ENCODE measurements at regions of chr12 and their contacts with region 1.

Region 1: DNA sequence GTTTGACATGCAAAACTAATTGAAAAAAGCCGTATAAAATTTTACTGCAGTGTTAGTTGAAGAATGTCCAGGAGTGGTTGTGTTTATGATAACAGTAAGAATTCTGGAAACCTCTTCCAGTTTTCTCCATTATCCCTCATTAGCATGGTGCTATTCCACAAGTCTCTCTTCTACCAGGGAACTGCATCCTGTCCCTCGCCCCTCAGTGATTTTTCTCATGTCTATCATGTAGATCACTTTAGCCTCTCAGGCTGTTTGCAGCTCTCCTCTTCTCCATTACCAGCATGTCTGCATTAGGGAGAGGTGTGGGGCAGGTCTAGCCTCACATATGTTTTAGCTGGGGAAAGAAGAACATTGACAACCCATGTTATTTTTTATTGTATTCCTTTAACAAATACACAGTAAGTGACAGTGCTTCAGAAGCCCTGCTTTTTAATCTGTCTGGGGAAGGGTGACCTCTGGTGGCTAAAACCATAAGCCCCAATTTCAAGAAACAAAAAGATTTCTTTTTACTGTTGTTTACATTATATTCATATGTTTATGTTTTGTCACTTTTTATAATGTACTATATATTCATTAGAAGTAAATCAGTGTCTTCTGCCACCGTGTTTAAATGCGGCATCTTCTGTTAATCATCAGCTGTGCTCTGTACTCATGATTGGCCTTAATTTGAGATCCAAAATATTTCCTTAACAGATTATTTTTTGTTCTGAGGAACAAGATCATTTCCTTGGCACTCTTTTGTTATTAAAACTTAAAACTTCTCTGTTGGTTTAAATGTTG is 70.7 kb downstream of the RASSF8 start:
- DNase-seq: peak in 1 of 3 donors; percentile 2
- H3K4me3 ChIP-seq: no peak overlapping the region
- H3K4me3 Mint-ChIP-seq: no peak overlapping the region
- H3K27ac ChIP-seq: no peak overlapping the region
- H3K27ac Mint-ChIP-seq: no peak overlapping the region
- H3K4me1 ChIP-seq: no peaks in the 10 kb centered on the region
- H3K4me1 Mint-ChIP-seq: no peaks in the 10 kb centered on the region
- H3K27me3 ChIP-seq: no peaks in the 10 kb centered on the region
- H3K27me3 Mint-ChIP-seq: peaks cover 0 to 1% (median 0%) of the 10 kb centered on the region in 3 donors
- CTCF ChIP-seq: peak; percentile 72

Region 2: DNA sequence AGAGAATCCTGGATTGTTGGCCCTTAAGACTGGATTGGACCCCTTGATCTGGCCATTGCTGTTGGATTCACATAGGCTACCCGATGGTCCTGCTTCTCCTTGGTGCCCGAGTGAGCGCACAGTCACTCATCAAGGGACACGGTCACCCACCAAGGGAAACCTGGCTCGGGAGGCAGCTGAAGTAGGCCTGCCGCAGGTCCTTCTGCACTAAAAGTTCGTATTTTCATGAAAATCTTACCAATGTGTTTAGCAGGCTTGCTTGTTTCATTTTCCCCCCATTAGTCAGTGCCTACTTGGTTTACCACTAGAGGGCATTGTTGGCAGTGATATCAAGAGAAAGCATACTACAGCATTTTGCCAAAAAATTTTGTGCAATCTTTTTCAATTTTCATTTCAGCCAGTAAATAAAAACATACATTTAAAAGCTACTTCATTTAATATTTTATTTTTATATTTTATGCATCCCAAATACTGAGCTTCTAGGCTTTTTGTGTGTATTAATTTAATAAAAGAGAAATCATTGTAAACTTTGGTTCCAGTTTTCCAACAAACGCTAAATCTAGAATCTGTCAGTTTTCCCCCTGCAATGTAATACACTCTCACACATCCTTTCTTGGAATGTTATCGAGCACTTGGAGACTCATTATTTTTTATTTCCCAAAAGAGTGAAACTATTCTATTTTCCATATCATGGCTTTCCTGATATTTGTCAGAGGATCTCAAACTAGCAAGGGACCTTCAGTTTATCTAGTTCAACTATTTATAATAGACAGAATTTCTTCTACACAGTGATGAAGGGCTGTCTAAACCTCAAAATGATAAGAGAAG is 592.7 kb before region 1 on chr12:
- intact Hi-C with region 1: loop called (anchors 5 to 10 kb)
- DNase-seq: peak; percentile 19 to 35 (median 20)
- H3K4me3 ChIP-seq: peak overlapping the region in 2 of 3 experiments; percentile 20 to 46
- H3K4me3 Mint-ChIP-seq: peak overlapping the region; percentile 20 to 44
- H3K27ac ChIP-seq: no peak overlapping the region
- H3K27ac Mint-ChIP-seq: peak overlapping the region in 1 of 7 donors; percentile 19
- H3K4me1 ChIP-seq: no peaks in the 10 kb centered on the region
- H3K4me1 Mint-ChIP-seq: peaks cover 2% of the 10 kb centered on the region
- H3K27me3 ChIP-seq: no peaks in the 10 kb centered on the region
- H3K27me3 Mint-ChIP-seq: peaks cover 1 to 4% (median 2%) of the 10 kb centered on the region in 3 donors
- CTCF ChIP-seq: peak; percentile 86

Region 3: DNA sequence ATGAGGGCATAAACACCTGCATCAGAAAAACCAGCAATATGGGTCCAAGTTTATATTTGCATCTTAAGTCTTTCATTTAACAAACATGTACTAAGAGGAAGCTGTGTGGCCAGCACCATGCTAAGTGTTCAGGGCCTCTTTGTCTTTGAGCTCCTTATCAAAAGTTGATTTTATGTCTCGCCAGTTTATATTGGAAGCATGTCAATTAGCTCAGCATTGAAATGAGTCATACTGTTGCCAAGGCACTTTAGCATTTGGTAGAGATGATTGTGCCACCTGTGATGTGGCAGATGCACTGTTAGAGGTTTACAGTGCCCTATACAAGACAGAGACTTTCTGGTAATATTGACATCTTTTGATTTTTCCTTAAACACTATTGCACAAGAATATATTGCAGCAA is 27.2 kb after region 1 on chr12:
- intact Hi-C with region 1: no loop called
- DNase-seq: no peak
- H3K4me3 ChIP-seq: no peak overlapping the region
- H3K4me3 Mint-ChIP-seq: no peak overlapping the region
- H3K27ac ChIP-seq: no peak overlapping the region
- H3K27ac Mint-ChIP-seq: no peak overlapping the region
- H3K4me1 ChIP-seq: no peaks in the 10 kb centered on the region
- H3K4me1 Mint-ChIP-seq: no peaks in the 10 kb centered on the region
- H3K27me3 ChIP-seq: no peaks in the 10 kb centered on the region
- H3K27me3 Mint-ChIP-seq: no peaks in the 10 kb centered on the region
- CTCF ChIP-seq: no peak

Region 4: DNA sequence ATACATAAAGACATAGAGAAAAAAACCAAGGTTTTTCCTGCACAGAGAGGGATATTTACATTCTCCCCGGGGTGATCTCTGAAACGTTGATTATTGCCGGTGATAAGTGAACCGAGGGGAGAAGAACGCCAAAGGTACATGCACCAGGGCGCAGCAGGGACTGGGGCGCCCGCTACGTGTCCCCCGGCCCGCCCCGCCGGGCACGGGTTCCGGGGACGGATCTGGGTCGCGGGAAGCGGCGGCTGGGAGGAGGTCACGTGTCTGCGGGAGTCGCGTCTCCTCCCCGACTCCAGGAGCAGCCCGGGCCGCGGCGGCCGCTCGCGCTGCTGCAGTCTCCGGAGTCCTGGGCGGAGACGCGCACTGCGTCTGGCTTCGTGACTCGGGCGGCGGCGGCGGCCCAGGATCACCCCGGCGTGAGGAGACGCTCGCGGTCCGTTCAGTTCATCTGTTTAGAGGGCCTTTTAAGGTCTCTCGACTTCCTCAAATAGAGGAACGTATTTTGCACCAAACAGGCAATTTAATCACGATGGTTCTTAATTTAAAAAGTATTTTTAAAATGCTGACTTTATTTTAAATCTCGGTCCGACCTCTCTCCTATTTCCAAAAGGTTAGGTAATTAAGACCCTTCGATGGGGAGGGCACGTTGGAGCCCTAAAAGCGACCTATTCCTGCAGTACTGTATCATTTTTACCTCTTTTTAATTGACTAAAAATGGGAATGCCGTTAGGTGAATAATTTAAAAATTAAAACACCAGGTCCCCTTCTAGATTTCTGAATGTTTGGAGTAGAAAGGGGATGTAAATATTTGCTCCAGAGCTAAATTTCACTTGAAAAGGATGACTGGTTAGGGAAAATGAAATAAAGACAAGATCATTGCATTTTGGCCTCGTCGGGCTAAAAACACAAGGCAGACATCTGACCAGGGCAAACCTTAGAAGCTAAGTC is 97.5 kb after region 1 on chr12:
- intact Hi-C with region 1: no loop called
- DNase-seq: peak; percentile 52 to 57 (median 53)
- H3K4me3 ChIP-seq: peak overlapping the region; percentile 19 to 75 (median 35)
- H3K4me3 Mint-ChIP-seq: peak overlapping the region; percentile 86 to 97
- H3K27ac ChIP-seq: no peak overlapping the region
- H3K27ac Mint-ChIP-seq: no peak overlapping the region
- H3K4me1 ChIP-seq: peaks cover 49 to 59% of the 10 kb centered on the region in 2 donors
- H3K4me1 Mint-ChIP-seq: peaks cover 51% of the 10 kb centered on the region
- H3K27me3 ChIP-seq: peaks cover 64 to 67% of the 10 kb centered on the region in 2 donors
- H3K27me3 Mint-ChIP-seq: peaks cover 69 to 78% (median 73%) of the 10 kb centered on the region in 3 donors
- CTCF ChIP-seq: no peak

Measured in CD14-positive monocyte (primary cell).